Activated CD8-positive, alpha-beta T cell treated with anti-CD3 and anti-CD28 coated beads for 36 hours (primary cell): ENCODE measurements at regions of chr12 and their contacts with region 1.

Region 1: DNA sequence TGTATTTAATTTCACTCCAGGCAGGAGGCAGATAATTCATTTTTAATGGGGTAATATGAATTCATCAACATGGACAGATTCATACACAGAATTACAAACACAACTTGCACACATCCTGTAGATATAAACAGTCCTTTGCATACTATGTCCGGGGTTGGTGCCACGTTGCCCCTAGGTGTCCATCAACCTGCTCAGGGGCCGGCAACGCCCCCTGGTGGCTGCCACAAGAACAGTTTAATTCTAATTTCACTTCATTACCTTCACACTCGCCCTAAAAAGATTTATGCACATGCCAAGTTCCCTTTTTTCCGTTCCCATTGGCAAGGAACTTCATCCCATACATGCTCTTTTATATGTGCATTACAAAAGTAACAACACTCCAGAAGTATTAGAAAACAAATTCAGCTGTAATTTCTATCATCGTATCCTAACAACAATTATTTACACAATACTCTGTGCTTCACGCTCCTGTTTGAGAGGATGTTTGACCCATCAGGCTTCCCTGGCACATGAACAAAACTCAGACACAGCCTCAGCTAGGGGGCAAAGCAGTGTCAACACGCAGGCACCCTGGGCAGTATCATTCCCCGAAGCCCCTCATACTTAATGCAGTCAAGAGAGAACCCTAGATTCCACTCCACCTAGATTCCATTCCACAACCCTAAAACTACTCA is 15.5 kb downstream of the MANSC1 start:
- DNase-seq: peak; percentile 77
- ATAC-seq: peak; percentile 90
- H3K4me3 Mint-ChIP-seq: no peak overlapping the region
- H3K27ac Mint-ChIP-seq: no peak overlapping the region
- H3K4me1 Mint-ChIP-seq: peaks cover 21% of the 10 kb centered on the region
- H3K27me3 Mint-ChIP-seq: no peaks in the 10 kb centered on the region
- CTCF ChIP-seq: peak; percentile 93

Region 2: GRCh38 chr12:11576104-11576503 is 758.4 kb before region 1 on chr12:
- CTCF ChIA-PET with region 1: interaction called, 4 read pairs
- POLR2A ChIA-PET with region 1: no interaction called
- intact Hi-C with region 1: loop called (anchors 10 kb)
- DNase-seq: peak; percentile 78
- ATAC-seq: peak; percentile 91
- H3K4me3 Mint-ChIP-seq: no peak overlapping the region
- H3K27ac Mint-ChIP-seq: no peak overlapping the region
- H3K4me1 Mint-ChIP-seq: peaks cover 11% of the 10 kb centered on the region
- H3K27me3 Mint-ChIP-seq: peaks cover 2% of the 10 kb centered on the region
- CTCF ChIP-seq: no peak

Region 3: DNA sequence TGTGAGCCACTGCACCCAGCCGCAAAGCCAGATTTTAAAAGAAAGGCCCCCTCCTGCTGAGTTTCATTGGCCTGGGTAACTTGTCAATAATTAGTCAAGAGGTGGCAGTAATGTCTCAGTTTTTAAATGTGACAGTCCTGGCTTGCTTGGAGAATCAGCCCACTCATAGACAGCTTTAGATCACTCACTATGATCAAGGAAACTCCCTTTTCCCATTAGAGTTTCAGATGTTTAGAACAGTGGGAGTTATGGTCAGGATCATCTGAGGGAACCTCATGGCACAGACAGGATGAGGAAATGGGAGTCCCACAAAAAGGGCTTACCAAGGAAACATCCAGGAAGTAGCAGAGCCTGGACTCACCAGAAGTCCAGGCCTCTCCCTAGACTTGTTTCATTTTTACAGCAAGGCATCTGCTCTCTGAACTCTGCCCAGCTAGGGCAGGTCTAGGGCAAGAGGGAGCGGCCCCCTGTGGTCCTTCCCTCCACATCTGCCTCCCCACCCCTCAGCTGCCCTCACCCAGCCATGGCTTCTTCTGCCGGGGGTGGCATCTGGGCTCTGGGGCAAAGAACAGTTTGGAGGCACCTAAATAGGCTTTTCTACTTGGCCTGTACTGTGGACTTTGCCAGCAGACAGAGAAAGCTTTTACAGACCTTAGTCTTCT is 252.5 kb before region 1 on chr12:
- CTCF ChIA-PET with region 1: interaction called, 34 read pairs
- POLR2A ChIA-PET with region 1: no interaction called
- intact Hi-C with region 1: loop called (anchors 5 kb)
- DNase-seq: no peak
- ATAC-seq: peak; percentile 66
- H3K4me3 Mint-ChIP-seq: no peak overlapping the region
- H3K27ac Mint-ChIP-seq: peak overlapping the region; percentile 42
- H3K4me1 Mint-ChIP-seq: peaks cover 3% of the 10 kb centered on the region
- H3K27me3 Mint-ChIP-seq: no peaks in the 10 kb centered on the region
- CTCF ChIP-seq: peak; percentile 11

Region 4: GRCh38 chr12:12294215-12295005 is 40.1 kb before region 1 on chr12:
- CTCF ChIA-PET with region 1: no interaction called
- POLR2A ChIA-PET with region 1: no interaction called
- intact Hi-C with region 1: no loop called
- DNase-seq: no peak
- ATAC-seq: no peak
- H3K4me3 Mint-ChIP-seq: no peak overlapping the region
- H3K27ac Mint-ChIP-seq: no peak overlapping the region
- H3K4me1 Mint-ChIP-seq: no peaks in the 10 kb centered on the region
- H3K27me3 Mint-ChIP-seq: peaks cover 2% of the 10 kb centered on the region
- CTCF ChIP-seq: no peak

Region 5: GRCh38 chr12:12319451-12320183 is 14.9 kb before region 1 on chr12:
- CTCF ChIA-PET with region 1: interaction called, 12 read pairs
- POLR2A ChIA-PET with region 1: no interaction called
- intact Hi-C with region 1: no loop called
- DNase-seq: no peak
- ATAC-seq: no peak
- H3K4me3 Mint-ChIP-seq: no peak overlapping the region
- H3K27ac Mint-ChIP-seq: no peak overlapping the region
- H3K4me1 Mint-ChIP-seq: no peaks in the 10 kb centered on the region
- H3K27me3 Mint-ChIP-seq: no peaks in the 10 kb centered on the region
- CTCF ChIP-seq: no peak

Region 6: DNA sequence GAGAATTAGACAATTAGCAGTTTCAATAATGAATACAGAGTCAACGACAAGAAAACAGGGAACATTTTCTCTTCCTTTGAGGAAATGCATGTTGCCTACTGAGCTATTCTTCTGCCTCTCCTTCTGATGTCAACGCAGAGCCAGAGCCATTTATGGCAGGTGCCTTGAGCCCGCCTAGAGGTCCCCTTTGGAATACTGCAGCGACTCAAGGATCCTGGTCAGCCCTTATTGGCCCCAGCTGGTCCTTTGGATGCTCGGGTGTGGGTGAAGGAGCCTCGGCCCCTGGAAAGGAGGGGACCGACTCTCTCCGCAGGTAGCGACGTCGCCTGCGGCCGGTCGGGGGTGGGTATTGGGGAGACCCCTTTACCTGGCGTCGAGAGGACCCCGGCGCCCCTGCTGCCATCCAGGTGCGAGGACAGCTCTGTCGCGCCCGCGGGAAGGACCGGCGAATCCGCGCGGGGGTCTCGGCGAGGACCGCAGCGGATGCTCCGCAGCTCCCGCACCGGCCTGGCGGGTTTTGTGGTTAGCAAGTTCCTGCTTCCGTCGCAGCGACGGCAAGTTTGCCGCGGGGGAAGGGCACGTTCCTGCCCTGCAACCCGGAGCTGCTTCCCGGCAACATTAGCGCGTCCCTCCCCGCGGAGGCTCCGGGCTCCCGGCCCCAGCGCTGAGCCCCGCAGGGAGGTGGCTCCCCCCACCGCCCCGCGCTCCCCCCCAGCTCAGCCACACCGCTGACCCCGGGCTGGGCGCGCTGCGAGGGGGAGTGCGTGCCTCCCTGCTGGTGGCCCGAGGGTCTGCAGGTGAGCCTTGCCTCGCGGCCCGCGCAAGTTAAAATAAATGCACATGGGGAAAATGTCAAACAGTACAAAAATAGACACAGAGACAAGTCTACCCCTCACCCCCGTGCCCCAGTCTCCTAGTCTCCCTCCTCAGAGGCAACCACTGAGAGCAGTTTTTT is 15.5 kb after region 1 on chr12 and contains the start of gene MANSC1:
- CTCF ChIA-PET with region 1: interaction called, 82 read pairs
- POLR2A ChIA-PET with region 1: no interaction called
- intact Hi-C with region 1: no loop called
- DNase-seq: peak; percentile 54
- ATAC-seq: peak; percentile 91
- H3K4me3 Mint-ChIP-seq: peak within 1 kb of the TSS; percentile 68
- H3K27ac Mint-ChIP-seq: peak within 1 kb of the TSS; percentile 56
- H3K4me1 Mint-ChIP-seq: peaks cover 17% of the 10 kb centered on the region
- H3K27me3 Mint-ChIP-seq: no peaks in the 10 kb centered on the region
- CTCF ChIP-seq: peak; percentile 86
- total RNA-seq, gene MANSC1: 0.09 to 0.20 TPM

Region 7: GRCh38 chr12:12534166-12534866 is 199.8 kb after region 1 on chr12:
- CTCF ChIA-PET with region 1: no interaction called
- POLR2A ChIA-PET with region 1: no interaction called
- intact Hi-C with region 1: no loop called
- DNase-seq: no peak
- ATAC-seq: peak; percentile 72
- H3K4me3 Mint-ChIP-seq: no peak overlapping the region
- H3K27ac Mint-ChIP-seq: peak overlapping the region; percentile 80
- H3K4me1 Mint-ChIP-seq: peaks cover 45% of the 10 kb centered on the region
- H3K27me3 Mint-ChIP-seq: no peaks in the 10 kb centered on the region
- CTCF ChIP-seq: no peak